GM12878 (cell line): ENCODE measurements at regions of chr10 and their contacts with region 1.

Region 1: GRCh38 chr10:12656518-12657142 is 307.3 kb downstream of the CAMK1D start:
- DNase-seq: no peak
- ATAC-seq: peak; percentile 89
- H3K4me3 ChIP-seq: no peak overlapping the region
- H3K27ac ChIP-seq: no peak overlapping the region
- H3K4me1 ChIP-seq: peaks cover 5% of the 10 kb centered on the region
- H3K27me3 ChIP-seq: no peaks in the 10 kb centered on the region
- CTCF ChIP-seq: peak; percentile 65 to 76 (median 66)
- EP300 ChIP-seq: no peak
- POLR2A ChIP-seq: no peak
- RAD21 ChIP-seq: peak; percentile 85

Region 2: DNA sequence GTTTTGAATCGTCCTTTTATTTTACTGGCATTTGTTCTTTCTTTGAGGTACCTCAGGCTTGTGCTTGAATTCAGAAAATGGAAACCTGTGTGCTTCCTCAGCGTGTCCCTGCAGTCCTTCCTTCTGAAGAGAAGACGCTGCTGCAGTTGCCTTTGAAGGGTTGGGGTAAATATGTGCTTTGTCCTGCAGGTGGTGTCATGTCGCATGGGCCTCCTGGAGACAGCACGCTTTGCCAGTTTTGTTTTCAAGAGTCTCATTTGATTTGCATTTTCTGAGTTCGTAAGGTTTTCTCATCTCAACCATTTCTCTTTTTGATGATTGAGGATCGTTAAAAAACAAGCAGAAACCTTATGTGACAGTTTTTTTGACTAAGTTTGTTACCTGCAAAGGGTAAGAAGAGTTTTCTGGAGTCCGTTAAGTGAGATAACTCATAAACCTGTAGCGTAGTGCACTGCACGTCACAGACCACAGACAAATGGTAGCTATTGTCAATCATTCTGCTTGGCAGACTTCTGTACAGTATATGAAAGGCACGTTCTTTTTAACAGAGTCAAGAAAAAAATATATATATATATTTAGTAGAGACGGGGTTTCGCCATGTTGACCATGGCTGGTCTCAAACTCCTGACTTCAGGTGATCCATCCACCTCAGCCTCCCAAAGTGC is 403.6 kb before region 1 on chr10:
- CTCF ChIA-PET with region 1: interaction called, 12 read pairs
- POLR2A ChIA-PET with region 1: no interaction called
- RAD21 ChIA-PET with region 1: interaction called, 7 read pairs
- SMC1A ChIA-PET with region 1: interaction called, 11 read pairs
- in situ Hi-C with region 1: no loop called
- intact Hi-C with region 1: no loop called
- DNase-seq: no peak
- ATAC-seq: peak; percentile 96
- H3K4me3 ChIP-seq: no peak overlapping the region
- H3K27ac ChIP-seq: no peak overlapping the region
- H3K4me1 ChIP-seq: no peaks in the 10 kb centered on the region
- H3K27me3 ChIP-seq: no peaks in the 10 kb centered on the region
- CTCF ChIP-seq: peak; percentile 64 to 70 (median 69)
- EP300 ChIP-seq: no peak
- POLR2A ChIP-seq: no peak
- RAD21 ChIP-seq: peak; percentile 86

Region 3: DNA sequence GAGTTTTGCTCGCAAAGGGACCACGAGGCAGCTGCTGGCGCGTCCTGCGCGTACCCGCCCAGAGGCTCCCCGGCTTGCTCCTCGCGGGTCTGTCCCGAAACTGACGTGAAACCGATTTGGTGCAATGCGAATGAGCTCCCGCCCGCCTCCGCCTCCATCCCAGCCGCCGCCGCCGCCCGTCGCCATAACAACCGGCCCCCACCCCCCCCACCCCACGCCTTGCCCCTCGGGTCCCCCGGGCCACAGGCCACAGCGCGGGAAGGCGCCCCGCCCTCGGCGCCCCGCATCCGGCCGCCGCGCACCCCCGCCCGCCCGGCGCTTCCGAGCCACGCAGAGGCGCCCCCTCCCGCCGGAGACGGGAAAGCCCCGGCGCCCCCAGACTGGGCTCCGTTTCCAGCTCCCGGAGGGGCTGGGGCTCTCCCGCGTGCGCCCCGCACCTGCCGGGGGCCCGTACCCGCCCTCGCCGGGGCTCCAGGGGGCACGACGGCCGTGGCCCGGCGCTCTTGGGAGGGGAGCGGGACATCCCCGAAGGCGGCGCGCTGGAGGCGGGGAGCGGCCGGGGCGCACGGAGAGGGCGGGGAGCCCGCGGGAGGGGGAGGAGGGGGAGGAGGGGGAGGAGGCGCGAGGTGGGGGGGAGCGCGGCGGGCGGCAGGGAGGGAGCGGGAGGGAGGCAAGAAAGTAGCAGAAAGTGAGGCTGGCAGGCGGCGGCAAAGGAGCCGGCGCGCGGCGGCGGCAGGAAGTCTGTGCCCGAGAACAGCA is 307.6 kb before region 1 on chr10 and contains the start of gene CAMK1D:
- CTCF ChIA-PET with region 1: interaction called, 8 read pairs
- POLR2A ChIA-PET with region 1: interaction called, 4 read pairs
- RAD21 ChIA-PET with region 1: interaction called, 11 read pairs
- SMC1A ChIA-PET with region 1: interaction called, 8 read pairs
- in situ Hi-C with region 1: no loop called
- intact Hi-C with region 1: loop called (anchors 5 kb)
- DNase-seq: no peak
- ATAC-seq: peak; percentile 57
- H3K4me3 ChIP-seq: peak within 1 kb of the TSS; percentile 92
- H3K27ac ChIP-seq: peak within 1 kb of the TSS; percentile 67
- H3K4me1 ChIP-seq: peaks cover 27% of the 10 kb centered on the region
- H3K27me3 ChIP-seq: no peaks in the 10 kb centered on the region
- CTCF ChIP-seq: peak; percentile 9 to 19 (median 15); a peak in 1 of 6 replicates
- EP300 ChIP-seq: no peak
- POLR2A ChIP-seq: peak; percentile 85
- RAD21 ChIP-seq: peak; percentile 11; the same call in 1 of the 2 replicates
- polyA plus RNA-seq, gene CAMK1D: 2.1 to 5.5 TPM

Region 4: DNA sequence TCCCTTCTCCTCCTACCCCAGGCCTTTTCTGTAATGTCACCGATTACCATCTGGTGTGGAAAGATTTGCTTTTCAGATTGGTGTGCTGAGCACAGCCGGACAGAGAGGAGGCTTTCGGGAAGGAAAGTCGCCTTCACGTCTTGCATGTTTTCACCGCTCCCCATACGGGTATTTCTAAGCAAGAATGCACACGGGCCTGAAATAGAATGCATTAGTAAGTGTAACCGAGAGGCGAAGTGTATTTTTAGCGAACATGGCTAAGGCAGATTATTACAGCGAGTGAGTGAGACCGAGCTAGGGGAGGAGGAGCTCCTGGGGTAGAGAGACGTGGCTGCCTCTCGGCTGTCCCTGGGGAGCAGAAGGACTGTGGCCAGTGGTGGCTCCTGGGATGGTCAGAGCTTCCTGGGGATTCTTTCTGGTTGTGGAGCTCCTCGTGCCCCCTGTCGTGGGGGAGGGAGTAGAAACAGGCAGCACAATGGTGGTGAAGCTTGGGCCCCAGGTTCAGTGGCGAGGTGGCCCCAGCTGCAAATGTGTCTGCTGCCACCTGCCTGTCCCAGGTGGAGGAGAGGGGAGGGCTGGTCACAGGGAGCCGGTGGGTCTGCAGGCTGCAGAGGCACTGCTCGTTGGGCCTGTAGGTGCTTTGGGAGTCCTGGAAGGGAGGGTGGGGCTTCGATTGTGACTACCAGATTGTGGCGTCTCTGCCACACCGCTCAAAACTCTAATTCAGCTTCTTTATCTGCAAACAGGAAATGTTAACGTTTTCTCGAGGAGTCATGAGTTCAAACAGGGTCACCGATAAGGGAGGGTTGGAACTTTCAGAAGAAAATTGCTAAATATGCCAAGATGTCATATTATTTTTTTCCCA is 171.5 kb before region 1 on chr10:
- CTCF ChIA-PET with region 1: interaction called, 11 read pairs
- POLR2A ChIA-PET with region 1: interaction called, 3 read pairs
- RAD21 ChIA-PET with region 1: interaction called, 13 read pairs
- SMC1A ChIA-PET with region 1: interaction called, 21 read pairs
- in situ Hi-C with region 1: no loop called
- intact Hi-C with region 1: loop called (anchors 10 kb)
- DNase-seq: peak; percentile 76
- ATAC-seq: peak; percentile 85
- H3K4me3 ChIP-seq: no peak overlapping the region
- H3K27ac ChIP-seq: peak overlapping the region; percentile 76
- H3K4me1 ChIP-seq: peaks cover 20% of the 10 kb centered on the region
- H3K27me3 ChIP-seq: no peaks in the 10 kb centered on the region
- CTCF ChIP-seq: peak in 2 of 3 experiments; percentile 37 to 56; a peak in 3 of 6 replicates
- EP300 ChIP-seq: no peak
- POLR2A ChIP-seq: peak; percentile 37
- RAD21 ChIP-seq: peak; percentile 31; the same call in 1 of the 2 replicates

Region 5: GRCh38 chr10:12710594-12711349 is 54.1 kb after region 1 on chr10:
- CTCF ChIA-PET with region 1: interaction called, 40 read pairs
- POLR2A ChIA-PET with region 1: no interaction called
- RAD21 ChIA-PET with region 1: interaction called, 16 read pairs
- SMC1A ChIA-PET with region 1: interaction called, 15 read pairs
- in situ Hi-C with region 1: no loop called
- intact Hi-C with region 1: no loop called
- DNase-seq: peak; percentile 26
- ATAC-seq: peak; percentile 98
- H3K4me3 ChIP-seq: no peak overlapping the region
- H3K27ac ChIP-seq: peak overlapping the region; percentile 43; the same call in 1 of the 2 replicates
- H3K4me1 ChIP-seq: peaks cover 2% of the 10 kb centered on the region; the same call in 1 of the 2 replicates
- H3K27me3 ChIP-seq: no peaks in the 10 kb centered on the region
- CTCF ChIP-seq: peak; percentile 93 to 97 (median 94)
- EP300 ChIP-seq: no peak
- POLR2A ChIP-seq: no peak
- RAD21 ChIP-seq: peak; percentile 97